Natural killer cell (primary cell): ENCODE measurements at regions of chr19 and their contacts with region 1.

Region 1: DNA sequence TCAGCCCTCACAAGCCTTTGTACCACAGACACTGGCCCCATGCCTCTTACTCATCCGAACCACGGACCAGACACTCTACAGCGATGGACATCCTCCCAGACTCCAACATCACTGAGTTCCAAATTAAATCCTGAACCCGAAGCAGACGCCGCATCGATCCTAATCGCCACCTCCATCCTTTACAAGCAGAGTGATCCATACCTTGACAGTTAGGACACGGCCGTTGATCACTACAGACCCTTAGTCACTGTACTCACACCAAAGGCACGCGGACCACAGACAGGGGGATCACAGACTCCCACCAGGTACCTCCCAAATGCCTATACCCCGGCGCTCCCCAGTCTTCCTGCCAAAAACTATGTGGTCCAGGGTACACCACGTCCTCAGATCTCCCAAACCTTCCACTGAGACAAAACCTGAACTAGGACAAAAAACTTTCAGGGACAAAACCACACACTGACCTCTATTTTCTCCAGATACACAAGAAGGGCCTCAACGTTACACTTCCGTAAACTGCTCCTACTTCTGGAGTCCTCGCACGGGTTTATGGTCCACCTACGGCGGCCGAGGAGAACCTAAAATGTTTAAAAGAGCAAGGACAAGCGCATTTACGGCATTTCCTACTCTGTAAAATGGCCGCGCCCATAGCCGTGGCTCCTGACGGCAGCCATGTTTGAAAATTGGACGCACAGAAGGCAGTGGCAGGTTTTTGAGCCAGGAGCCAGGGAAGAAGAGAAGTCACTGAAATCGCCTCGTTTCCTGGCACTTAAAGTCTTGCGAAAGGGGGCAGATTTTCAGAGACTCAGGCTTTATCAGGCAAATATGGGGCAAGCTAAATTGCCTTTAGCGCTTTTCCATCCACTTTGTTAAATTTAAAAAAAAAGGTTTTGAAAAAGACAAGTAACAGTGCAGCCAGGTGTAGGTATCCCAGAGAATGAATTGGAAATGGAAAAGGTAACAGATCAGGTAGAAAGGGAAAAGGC is at the start of gene ZNF350:
- DNase-seq: peak; percentile 86 to 95
- ATAC-seq: peak; percentile 98 to 100 (median 98)
- H3K4me3 ChIP-seq: peak within 1 kb of the TSS; percentile 83
- H3K4me3 Mint-ChIP-seq: peak within 1 kb of the TSS; percentile 96
- H3K27ac ChIP-seq: peak within 1 kb of the TSS; percentile 68
- H3K27ac Mint-ChIP-seq: peak within 1 kb of the TSS; percentile 90 to 96
- H3K4me1 ChIP-seq: peaks cover 15% of the 10 kb centered on the region
- H3K4me1 Mint-ChIP-seq: peaks cover 12 to 13% of the 10 kb centered on the region in 2 donors
- H3K27me3 ChIP-seq: no peaks in the 10 kb centered on the region
- H3K27me3 Mint-ChIP-seq: no peaks in the 10 kb centered on the region
- CTCF ChIP-seq: no peak
- total RNA-seq, gene ZNF350: 32.3 to 46.9 (median 36.6) TPM

Region 2: DNA sequence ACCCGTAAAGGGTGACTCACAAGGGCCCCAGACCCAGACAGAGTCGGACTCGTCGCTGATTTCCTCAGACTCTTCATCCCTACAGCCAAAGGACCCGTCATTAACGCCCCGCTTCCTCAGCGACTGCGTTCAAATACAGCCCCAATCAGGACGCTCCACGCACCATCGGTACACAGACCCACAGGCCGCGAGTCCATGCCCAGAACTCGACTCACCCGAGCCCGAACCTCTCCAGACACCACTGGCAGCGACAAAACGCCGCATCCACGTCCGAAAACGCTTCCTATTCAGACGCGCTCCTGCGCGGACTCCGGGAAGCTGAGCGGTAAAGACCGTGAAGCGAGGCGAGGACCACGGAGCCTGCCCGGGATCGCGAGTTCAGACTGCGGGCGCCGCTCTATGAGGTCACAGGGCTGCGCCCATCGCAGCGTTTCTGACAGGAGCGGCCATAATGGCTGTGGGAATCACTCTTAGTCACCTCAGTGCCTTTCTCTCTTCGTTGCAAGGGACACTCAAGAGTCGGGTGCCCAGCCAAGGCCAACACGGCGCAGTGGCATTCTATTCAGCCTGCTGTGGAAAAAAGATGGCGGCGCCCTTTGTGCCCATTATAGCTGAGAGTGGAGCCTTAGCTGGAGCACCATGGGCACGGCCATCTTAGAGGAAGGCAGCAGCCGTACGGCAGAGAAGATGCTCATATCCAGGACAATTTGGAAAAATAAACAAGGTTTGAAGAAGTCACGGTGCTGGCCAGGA is 41.6 kb after region 1 on chr19 and contains the start of gene ZNF614:
- intact Hi-C with region 1: loop called (anchors 1 kb)
- DNase-seq: peak; percentile 90
- ATAC-seq: peak; percentile 83 to 94 (median 87)
- H3K4me3 ChIP-seq: peak within 1 kb of the TSS; percentile 84
- H3K4me3 Mint-ChIP-seq: peak within 1 kb of the TSS; percentile 89
- H3K27ac ChIP-seq: peak within 1 kb of the TSS; percentile 93
- H3K27ac Mint-ChIP-seq: peak within 1 kb of the TSS; percentile 94 to 99
- H3K4me1 ChIP-seq: peaks cover 7% of the 10 kb centered on the region
- H3K4me1 Mint-ChIP-seq: peaks cover 24 to 30% of the 10 kb centered on the region in 2 donors
- H3K27me3 ChIP-seq: no peaks in the 10 kb centered on the region
- H3K27me3 Mint-ChIP-seq: no peaks in the 10 kb centered on the region
- CTCF ChIP-seq: no peak
- total RNA-seq, gene ZNF614: 4.3 to 9.2 (median 5.7) TPM

Region 3: DNA sequence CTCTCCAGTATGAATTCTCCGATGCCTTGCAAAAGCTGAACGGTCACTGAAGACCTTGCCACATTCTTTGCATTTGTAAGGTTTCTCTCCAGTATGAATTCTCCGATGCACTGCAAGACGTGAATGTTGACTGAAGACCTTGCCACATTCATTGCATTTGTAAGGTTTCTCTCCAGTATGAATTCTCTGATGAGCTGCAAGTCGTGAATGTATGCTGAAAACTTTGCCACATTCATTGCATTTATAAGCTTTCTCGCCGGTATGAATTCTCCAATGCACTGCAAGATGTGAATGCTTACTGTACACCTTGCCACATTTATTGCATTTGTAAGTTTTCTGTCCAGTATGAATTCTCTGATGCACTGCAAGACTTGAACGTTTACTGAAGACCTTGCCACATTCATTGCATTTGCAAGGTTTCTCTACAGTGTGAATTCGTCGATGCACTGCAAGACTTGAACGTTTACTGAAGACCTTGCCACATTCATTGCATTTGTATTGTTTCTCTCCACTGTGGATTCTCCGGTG is 129.0 kb after region 1 on chr19:
- intact Hi-C with region 1: no loop called
- DNase-seq: no peak
- ATAC-seq: no peak
- H3K4me3 ChIP-seq: no peak overlapping the region
- H3K4me3 Mint-ChIP-seq: no peak overlapping the region
- H3K27ac ChIP-seq: no peak overlapping the region
- H3K27ac Mint-ChIP-seq: no peak overlapping the region
- H3K4me1 ChIP-seq: no peaks in the 10 kb centered on the region
- H3K4me1 Mint-ChIP-seq: no peaks in the 10 kb centered on the region
- H3K27me3 ChIP-seq: no peaks in the 10 kb centered on the region
- H3K27me3 Mint-ChIP-seq: no peaks in the 10 kb centered on the region
- CTCF ChIP-seq: no peak

Region 4: DNA sequence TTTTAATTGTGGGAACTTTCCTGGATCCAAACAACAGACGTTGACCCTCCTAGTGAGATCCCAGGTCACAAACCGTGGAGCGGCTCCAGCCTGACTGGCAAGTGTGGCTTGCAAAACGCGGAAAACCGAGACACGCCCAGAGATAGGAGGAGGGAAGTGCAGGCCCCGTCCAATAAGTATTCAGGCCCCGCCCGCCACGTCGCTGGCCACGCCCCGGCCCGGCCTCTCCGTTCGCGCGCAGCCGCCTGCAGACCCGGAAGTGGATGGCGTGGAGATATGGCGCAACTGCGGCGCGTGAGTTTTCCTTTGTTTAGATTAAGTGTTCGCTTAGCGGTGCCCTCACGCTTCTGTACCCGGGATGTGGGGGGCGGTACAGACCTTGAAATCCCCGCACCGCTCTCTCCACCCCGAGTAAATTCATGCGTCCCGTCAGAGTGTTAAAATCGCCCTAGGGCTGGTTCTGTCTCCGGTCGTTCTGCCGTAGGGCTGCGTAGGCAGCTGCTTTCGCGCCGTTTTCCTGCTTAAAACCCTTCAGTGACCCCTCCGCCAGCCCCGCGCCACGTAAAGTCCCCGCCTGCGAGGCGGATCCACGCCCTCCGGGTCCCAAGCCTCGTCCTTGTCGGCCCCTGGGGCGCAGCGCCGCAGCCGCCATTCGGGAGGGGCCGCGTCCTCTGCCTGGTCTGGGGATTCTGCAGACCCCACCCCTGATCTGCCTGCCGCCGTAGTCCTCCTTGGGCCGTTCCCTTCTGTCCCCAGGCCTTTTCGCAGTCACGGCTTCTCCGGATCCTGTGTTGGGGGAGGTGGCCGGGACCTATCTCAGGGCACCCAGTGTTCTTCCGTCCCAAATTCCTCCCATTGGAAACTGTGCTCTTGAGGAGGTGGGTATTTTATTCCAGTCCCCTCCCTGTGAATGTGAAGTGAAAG is 283.0 kb after region 1 on chr19 and contains the start of gene ZNF766:
- intact Hi-C with region 1: no loop called
- DNase-seq: peak; percentile 96 to 98
- ATAC-seq: peak; percentile 98 to 100 (median 98)
- H3K4me3 ChIP-seq: peak within 1 kb of the TSS; percentile 98
- H3K4me3 Mint-ChIP-seq: peak within 1 kb of the TSS; percentile 98
- H3K27ac ChIP-seq: peak within 1 kb of the TSS; percentile 98
- H3K27ac Mint-ChIP-seq: peak within 1 kb of the TSS; percentile 89
- H3K4me1 ChIP-seq: peaks cover 19% of the 10 kb centered on the region
- H3K4me1 Mint-ChIP-seq: peaks cover 39 to 40% of the 10 kb centered on the region in 2 donors
- H3K27me3 ChIP-seq: no peaks in the 10 kb centered on the region
- H3K27me3 Mint-ChIP-seq: no peaks in the 10 kb centered on the region
- CTCF ChIP-seq: no peak
- total RNA-seq, gene ZNF766: 29.4 to 36.9 (median 32.9) TPM